GM10248 (cell line): ENCODE measurements at regions of chr14 and their contacts with region 1.

Region 1: DNA sequence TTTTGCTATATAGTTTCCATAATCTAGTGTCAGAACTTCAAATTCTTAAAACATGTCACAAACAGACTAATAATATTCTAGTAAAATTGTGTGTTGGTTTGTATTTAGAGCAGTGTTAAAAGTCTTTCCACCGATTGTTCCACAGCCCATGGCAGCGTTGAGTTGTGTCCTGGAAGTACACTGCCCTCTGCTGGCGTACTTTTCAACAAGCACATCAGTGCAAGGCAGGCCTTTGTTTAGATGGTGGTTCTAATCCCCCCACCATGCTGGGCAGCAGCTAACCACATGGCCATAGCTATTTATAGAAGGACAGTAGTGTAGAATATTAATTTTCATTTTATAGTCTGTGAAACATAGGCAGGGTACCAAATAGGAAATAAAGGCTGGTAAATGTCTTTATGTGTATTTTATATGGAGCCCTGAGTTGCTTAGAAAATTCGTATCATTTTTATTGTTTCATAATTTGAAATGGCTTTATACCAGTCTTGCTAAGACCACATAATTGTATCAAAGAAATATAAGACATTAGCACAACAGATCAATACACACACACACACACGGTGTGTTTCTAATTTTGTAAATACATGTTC is 235.4 kb downstream of the SEC23A start:
- DNase-seq: peak; percentile 23
- CTCF ChIP-seq: peak; percentile 72

Region 2: GRCh38 chr14:38721822-38722431 is 145.7 kb before region 1 on chr14:
- CTCF ChIA-PET with region 1: interaction called, 34 read pairs
- POLR2A ChIA-PET with region 1: no interaction called
- DNase-seq: peak; percentile 38
- CTCF ChIP-seq: peak; percentile 73

Region 3: GRCh38 chr14:38880643-38881524 is 13.2 kb after region 1 on chr14:
- CTCF ChIA-PET with region 1: interaction called, 19 read pairs
- POLR2A ChIA-PET with region 1: no interaction called
- DNase-seq: no peak
- CTCF ChIP-seq: no peak